Tibial artery (tissue), 4 donors: ENCODE measurements at regions of chr9 and their contacts with region 1.

Region 1: GRCh38 chr9:136790927-136791641 is at the start of gene TMEM141:
- DNase-seq: peak; percentile 100
- H3K4me3 ChIP-seq: peak within 1 kb of the TSS; percentile 71 to 72
- H3K27ac ChIP-seq: peak within 1 kb of the TSS; percentile 87 to 92
- H3K4me1 ChIP-seq: peaks cover 0 to 27% (median 13%) of the 10 kb centered on the region in 4 donors
- H3K27me3 ChIP-seq: peaks cover 0 to 17% of the 10 kb centered on the region in 2 donors
- CTCF ChIP-seq: no peak

Region 2: GRCh38 chr9:136849038-136849959 is 58.2 kb after region 1 on chr9 and contains the start of gene PHPT1:
- intact Hi-C with region 1: no loop called
- DNase-seq: peak; percentile 98 to 99
- H3K4me3 ChIP-seq: peak within 1 kb of the TSS; percentile 70 to 94
- H3K27ac ChIP-seq: peak within 1 kb of the TSS; percentile 92 to 96
- H3K4me1 ChIP-seq: peaks cover 0 to 57% (median 39%) of the 10 kb centered on the region in 4 donors
- H3K27me3 ChIP-seq: peaks cover 0 to 28% of the 10 kb centered on the region in 2 donors
- CTCF ChIP-seq: no peak

Region 3: GRCh38 chr9:137035937-137036336 is 244.9 kb after region 1 on chr9:
- intact Hi-C with region 1: loop called (anchors 2 kb)
- DNase-seq: no peak
- H3K4me3 ChIP-seq: no peak overlapping the region
- H3K27ac ChIP-seq: no peak overlapping the region
- H3K4me1 ChIP-seq: peaks cover 0 to 15% (median 7%) of the 10 kb centered on the region in 4 donors
- H3K27me3 ChIP-seq: peaks cover 0 to 18% of the 10 kb centered on the region in 2 donors
- CTCF ChIP-seq: no peak